ENCODE measurements at regions of chr9 and their contacts with region 1.

Region 1: DNA sequence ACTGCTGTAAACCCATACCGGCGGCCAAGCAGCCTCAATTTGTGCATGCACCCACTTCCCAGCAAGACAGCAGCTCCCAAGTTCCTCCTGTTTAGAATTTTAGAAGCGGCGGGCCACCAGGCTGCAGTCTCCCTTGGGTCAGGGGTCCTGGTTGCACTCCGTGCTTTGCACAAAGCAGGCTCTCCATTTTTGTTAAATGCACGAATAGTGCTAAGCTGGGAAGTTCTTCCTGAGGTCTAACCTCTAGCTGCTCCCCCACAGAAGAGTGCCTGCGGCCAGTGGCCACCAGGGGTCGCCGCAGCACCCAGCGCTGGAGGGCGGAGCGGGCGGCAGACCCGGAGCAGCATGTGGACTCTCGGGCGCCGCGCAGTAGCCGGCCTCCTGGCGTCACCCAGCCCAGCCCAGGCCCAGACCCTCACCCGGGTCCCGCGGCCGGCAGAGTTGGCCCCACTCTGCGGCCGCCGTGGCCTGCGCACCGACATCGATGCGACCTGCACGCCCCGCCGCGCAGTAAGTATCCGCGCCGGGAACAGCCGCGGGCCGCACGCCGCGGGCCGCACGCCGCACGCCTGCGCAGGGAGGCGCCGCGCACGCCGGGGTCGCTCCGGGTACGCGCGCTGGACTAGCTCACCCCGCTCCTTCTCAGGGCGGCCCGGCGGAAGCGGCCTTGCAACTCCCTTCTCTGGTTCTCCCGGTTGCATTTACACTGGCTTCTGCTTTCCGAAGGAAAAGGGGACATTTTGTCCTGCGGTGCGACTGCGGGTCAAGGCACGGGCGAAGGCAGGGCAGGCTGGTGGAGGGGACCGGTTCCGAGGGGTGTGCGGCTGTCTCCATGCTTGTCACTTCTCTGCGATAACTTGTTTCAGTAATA is at the start of gene FXN:
- DNase-seq: peak; percentile 75
- ATAC-seq: peak; percentile 95
- H3K4me3 ChIP-seq: peak within 1 kb of the TSS; percentile 96
- H3K27ac ChIP-seq: peak within 1 kb of the TSS; percentile 22
- H3K4me1 ChIP-seq: peaks cover 6% of the 10 kb centered on the region; the same call in 1 of the 2 replicates
- H3K27me3 ChIP-seq: no peaks in the 10 kb centered on the region
- CTCF ChIP-seq: peak; percentile 87
- total RNA-seq, gene FXN: 10.0 and 11.0 TPM in 2 replicates

Region 2: GRCh38 chr9:68455451-68455850 is 580.2 kb before region 1 on chr9:
- CTCF ChIA-PET with region 1: no interaction called
- POLR2A ChIA-PET with region 1: no interaction called
- intact Hi-C with region 1: no loop called
- DNase-seq: no peak
- ATAC-seq: no peak
- H3K4me3 ChIP-seq: no peak overlapping the region
- H3K27ac ChIP-seq: no peak overlapping the region
- H3K4me1 ChIP-seq: peaks cover 23% of the 10 kb centered on the region
- H3K27me3 ChIP-seq: no peaks in the 10 kb centered on the region
- CTCF ChIP-seq: no peak

Region 3: GRCh38 chr9:68595868-68596267 is 439.8 kb before region 1 on chr9:
- CTCF ChIA-PET with region 1: interaction called, 15 read pairs
- POLR2A ChIA-PET with region 1: no interaction called
- intact Hi-C with region 1: no loop called
- DNase-seq: no peak
- ATAC-seq: no peak
- H3K4me3 ChIP-seq: no peak overlapping the region
- H3K27ac ChIP-seq: no peak overlapping the region
- H3K4me1 ChIP-seq: no peaks in the 10 kb centered on the region
- H3K27me3 ChIP-seq: peaks cover 19% of the 10 kb centered on the region
- CTCF ChIP-seq: no peak

Region 4: DNA sequence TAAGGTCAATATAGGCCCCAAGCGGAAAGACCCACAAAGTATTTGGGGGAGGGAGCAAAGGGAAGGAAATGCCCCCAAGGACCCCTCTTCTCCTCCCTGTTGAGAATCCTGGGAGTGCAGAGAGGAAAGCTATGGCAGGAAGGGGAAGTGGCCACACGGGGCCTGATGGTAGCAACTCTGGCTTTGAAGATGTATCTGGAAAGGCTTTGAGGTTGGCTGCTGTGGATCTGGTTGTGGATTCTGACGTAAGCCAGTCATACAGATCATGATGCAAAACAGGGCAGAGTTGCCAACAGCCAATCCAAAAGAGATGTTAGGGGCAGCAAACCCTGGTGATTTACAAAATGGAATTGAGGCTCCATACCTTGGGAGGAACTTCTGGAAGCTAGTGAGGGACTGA is 130.5 kb before region 1 on chr9:
- CTCF ChIA-PET with region 1: no interaction called
- POLR2A ChIA-PET with region 1: no interaction called
- intact Hi-C with region 1: no loop called
- DNase-seq: no peak
- ATAC-seq: no peak
- H3K4me3 ChIP-seq: no peak overlapping the region
- H3K27ac ChIP-seq: no peak overlapping the region
- H3K4me1 ChIP-seq: no peaks in the 10 kb centered on the region
- H3K27me3 ChIP-seq: peaks cover 79% of the 10 kb centered on the region
- CTCF ChIP-seq: no peak

Region 5: DNA sequence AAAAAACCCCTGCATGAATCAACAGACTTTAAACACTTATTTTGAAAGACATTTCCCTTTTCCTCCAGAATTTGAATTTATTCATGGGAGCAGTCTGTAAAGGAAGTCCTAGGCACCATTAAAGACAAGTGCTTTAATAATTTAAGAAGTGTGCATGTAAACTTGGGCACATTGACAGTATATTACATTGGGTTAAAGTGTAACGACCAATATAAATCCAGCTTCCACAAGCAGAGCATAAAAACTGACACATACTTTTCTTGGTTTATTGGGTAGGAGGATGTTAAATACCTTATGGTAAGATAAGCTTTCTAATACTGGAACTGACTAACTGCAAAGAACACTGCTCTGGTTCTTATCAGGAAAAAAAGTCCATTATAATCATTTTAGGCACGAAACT is 288.2 kb after region 1 on chr9:
- CTCF ChIA-PET with region 1: no interaction called
- POLR2A ChIA-PET with region 1: interaction called, 14 read pairs
- intact Hi-C with region 1: no loop called
- DNase-seq: no peak
- ATAC-seq: no peak
- H3K4me3 ChIP-seq: no peak overlapping the region
- H3K27ac ChIP-seq: no peak overlapping the region
- H3K4me1 ChIP-seq: no peaks in the 10 kb centered on the region
- H3K27me3 ChIP-seq: peaks cover 38% of the 10 kb centered on the region
- CTCF ChIP-seq: no peak

Measured in PC-3 (cell line).